CD4-positive, alpha-beta memory T cell (primary cell): ENCODE measurements at regions of chr6 and their contacts with region 1.

Region 1: DNA sequence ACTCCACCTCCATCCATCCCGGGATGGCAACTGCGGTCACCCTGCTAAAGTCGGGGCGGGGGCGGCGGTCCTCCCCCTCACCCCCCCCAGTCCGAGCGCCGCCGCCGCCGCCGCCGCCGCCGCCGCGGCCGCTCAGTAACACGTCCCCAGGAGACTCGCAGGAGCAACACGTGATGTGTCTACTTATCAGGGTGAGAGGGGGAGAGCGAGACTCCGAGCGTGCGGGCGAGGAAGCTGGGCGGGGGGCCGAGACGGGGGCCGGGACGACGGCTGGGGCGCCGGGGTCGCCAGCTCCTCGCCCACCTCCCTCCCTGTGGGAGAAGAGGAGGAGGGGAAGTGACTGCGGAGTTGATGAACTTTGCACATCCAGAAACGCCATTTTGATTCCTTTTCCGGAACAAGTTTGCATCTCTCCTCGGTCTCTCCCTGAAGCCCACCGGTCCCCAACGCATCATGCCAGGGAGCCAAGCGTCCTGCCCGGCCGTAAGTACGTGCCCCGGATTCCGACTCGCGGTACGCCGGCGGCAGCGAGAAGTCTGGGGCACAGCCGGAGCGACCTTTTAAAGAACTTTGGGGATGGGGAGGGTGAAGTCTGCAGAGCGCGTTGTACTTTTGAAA is at the start of gene RREB1:
- DNase-seq: peak; percentile 54 to 77 (median 64)
- H3K4me3 ChIP-seq: peak within 1 kb of the TSS; percentile 82 to 99
- H3K4me3 Mint-ChIP-seq: peak within 1 kb of the TSS; percentile 94 to 97 (median 96)
- H3K27ac ChIP-seq: peak within 1 kb of the TSS; percentile 74
- H3K27ac Mint-ChIP-seq: peak within 1 kb of the TSS; percentile 94 to 96 (median 95)
- H3K4me1 ChIP-seq: peaks cover 36% of the 10 kb centered on the region
- H3K4me1 Mint-ChIP-seq: peaks cover 30 to 44% (median 36%) of the 10 kb centered on the region in 4 donors
- H3K27me3 ChIP-seq: no peaks in the 10 kb centered on the region
- H3K27me3 Mint-ChIP-seq: no peaks in the 10 kb centered on the region
- total RNA-seq, gene RREB1: 43.0 to 43.4 TPM

Region 2: DNA sequence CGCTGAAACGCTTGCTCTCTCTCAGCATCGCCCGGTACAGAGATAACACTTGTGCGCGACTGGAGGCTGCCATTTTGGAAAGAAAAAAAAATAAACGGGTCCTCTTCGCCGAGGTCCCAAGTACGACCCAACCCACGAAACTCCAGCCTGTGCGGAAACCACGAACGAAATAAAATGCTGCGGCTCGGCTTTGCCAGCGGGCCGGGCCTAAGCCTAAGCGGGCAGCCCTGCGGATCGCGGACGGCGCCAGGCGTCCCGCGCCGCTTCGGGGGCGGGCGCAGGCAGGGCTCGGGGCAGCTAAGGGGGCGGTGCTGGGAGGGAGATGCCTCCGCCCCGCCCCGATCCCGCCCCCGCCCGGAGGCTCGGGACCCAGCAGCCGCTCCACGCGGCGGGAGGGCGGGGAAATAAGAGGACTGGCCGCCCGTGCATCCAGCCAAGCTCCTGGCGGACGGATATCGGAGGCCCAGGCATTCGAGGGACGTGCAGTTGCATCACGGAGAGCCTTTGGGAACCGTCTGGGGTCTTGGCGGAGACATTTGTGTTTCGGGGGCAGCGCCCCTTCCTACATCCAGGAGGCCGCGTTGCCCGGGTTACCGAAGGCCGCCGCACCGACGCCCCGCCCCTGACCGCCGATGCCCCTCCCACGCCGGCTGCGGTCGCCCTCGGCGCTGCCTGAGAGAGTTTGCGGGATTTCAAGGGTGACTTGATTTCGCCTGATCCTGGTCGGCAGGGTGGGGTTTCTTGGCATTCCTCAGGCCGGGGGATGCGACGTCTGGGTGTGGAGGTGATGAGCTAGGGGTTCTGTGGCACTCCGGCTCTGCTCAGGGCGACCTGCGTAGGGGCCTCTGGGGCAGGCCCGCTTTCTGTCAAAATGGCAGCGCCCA is 1846.8 kb before region 1 on chr6 and contains the starts of genes FARS2 and LYRM4:
- CTCF ChIA-PET with region 1: no interaction called
- POLR2A ChIA-PET with region 1: no interaction called
- intact Hi-C with region 1: loop called (anchors 5 kb)
- DNase-seq: peak; percentile 90 to 99 (median 96)
- H3K4me3 ChIP-seq: peak within 1 kb of the TSS; percentile 95 to 96
- H3K4me3 Mint-ChIP-seq: peak within 1 kb of the TSS; percentile 96 to 99 (median 99)
- H3K27ac ChIP-seq: peak within 1 kb of the TSS; percentile 95
- H3K27ac Mint-ChIP-seq: peak within 1 kb of the TSS; percentile 99 to 100 (median 100)
- H3K4me1 ChIP-seq: peaks cover 21% of the 10 kb centered on the region
- H3K4me1 Mint-ChIP-seq: peaks cover 18 to 40% (median 27%) of the 10 kb centered on the region in 4 donors
- H3K27me3 ChIP-seq: no peaks in the 10 kb centered on the region
- H3K27me3 Mint-ChIP-seq: no peaks in the 10 kb centered on the region
- total RNA-seq, gene FARS2: 15.6 to 19.2 TPM
- total RNA-seq, gene LYRM4: 10.6 to 14.3 TPM

Region 3: GRCh38 chr6:6366803-6367202 is 740.9 kb before region 1 on chr6:
- CTCF ChIA-PET with region 1: no interaction called
- POLR2A ChIA-PET with region 1: no interaction called
- intact Hi-C with region 1: no loop called
- DNase-seq: no peak
- H3K4me3 ChIP-seq: no peak overlapping the region
- H3K4me3 Mint-ChIP-seq: no peak overlapping the region
- H3K27ac ChIP-seq: no peak overlapping the region
- H3K27ac Mint-ChIP-seq: no peak overlapping the region
- H3K4me1 ChIP-seq: no peaks in the 10 kb centered on the region
- H3K4me1 Mint-ChIP-seq: no peaks in the 10 kb centered on the region
- H3K27me3 ChIP-seq: no peaks in the 10 kb centered on the region
- H3K27me3 Mint-ChIP-seq: peaks cover 2 to 4% of the 10 kb centered on the region in 2 donors

Region 4: DNA sequence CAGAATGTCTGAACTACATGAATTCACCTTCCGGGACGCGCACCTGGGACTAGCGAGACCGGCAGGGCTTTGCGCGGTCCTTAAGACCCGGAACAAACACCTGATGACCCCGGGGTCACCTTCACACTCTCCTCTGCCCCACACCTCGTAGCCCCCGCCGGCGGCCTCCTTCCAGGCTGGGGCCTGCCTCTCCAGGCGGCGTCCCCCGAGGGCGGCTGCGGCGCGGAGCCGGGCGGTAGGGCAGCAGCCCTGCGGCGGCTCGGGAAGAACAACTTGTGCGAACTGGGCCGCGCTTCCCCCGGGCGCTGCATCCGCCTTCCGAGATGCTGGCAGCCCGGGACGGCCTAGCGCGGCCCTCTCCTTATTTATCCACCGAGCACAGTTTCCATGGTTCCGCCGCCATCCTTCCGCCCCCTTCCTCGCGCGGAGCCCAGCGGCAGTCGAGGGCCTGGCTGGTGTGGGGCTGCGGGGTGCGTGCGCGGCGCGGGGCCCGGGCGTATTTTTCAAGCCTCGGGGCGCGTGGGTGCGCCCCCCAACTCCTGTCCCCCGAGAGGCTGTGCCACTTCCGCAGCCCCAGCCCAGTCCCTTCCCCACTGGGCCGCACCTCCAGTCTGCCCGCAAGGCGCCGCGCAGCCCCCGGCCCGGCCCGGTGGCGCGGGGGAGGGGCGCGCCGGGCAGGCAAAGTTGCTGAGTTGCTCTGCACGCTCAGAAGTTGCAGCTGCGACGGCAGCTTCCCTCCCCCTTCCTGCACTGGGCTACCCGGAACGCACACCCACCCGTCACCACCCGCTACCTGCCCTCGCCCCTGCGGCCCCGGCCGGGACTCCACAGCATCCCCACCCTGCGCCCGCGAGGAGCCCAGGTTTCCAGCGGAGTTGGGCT is 56.2 kb before region 1 on chr6:
- CTCF ChIA-PET with region 1: interaction called, 4 read pairs
- POLR2A ChIA-PET with region 1: interaction called, 14 read pairs
- intact Hi-C with region 1: loop called (anchors 2 kb)
- DNase-seq: peak; percentile 57 to 69 (median 60)
- H3K4me3 ChIP-seq: peak overlapping the region; percentile 23 to 59
- H3K4me3 Mint-ChIP-seq: peak overlapping the region; percentile 65 to 85 (median 72)
- H3K27ac ChIP-seq: peak overlapping the region; percentile 25
- H3K27ac Mint-ChIP-seq: peak overlapping the region in 2 of 7 donors; percentile 57 to 60
- H3K4me1 ChIP-seq: peaks cover 8% of the 10 kb centered on the region
- H3K4me1 Mint-ChIP-seq: peaks cover 2 to 13% (median 9%) of the 10 kb centered on the region in 4 donors
- H3K27me3 ChIP-seq: no peaks in the 10 kb centered on the region
- H3K27me3 Mint-ChIP-seq: no peaks in the 10 kb centered on the region

Region 5: DNA sequence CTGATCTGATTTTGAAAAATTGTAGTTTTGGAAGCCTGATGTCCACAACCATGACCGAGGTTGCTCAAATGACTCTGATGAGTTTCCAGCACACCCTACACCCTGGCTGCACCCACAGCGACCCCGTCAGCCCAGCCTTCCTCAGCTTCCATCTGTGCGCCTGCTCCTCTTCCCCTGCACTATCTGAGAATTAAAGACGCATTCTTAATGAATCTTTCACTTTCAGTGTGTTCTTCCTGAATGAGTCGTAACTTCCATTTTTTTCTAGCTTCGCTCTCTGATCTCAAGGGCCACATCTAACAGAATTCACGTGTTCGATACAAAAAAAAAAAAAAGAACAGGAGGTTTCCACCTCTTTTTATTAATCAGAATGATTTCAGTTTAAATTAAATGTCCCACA is 21.2 kb before region 1 on chr6:
- CTCF ChIA-PET with region 1: interaction called, 18 read pairs
- POLR2A ChIA-PET with region 1: interaction called, 58 read pairs
- intact Hi-C with region 1: loop called (anchors 1 kb)
- DNase-seq: peak in 4 of 5 donors; percentile 47 to 56 (median 52)
- H3K4me3 ChIP-seq: peak overlapping the region; percentile 13 to 44
- H3K4me3 Mint-ChIP-seq: peak overlapping the region; percentile 72 to 97 (median 86)
- H3K27ac ChIP-seq: peak overlapping the region; percentile 17
- H3K27ac Mint-ChIP-seq: peak overlapping the region; percentile 76 to 96 (median 88)
- H3K4me1 ChIP-seq: peaks cover 25% of the 10 kb centered on the region
- H3K4me1 Mint-ChIP-seq: peaks cover 17 to 39% (median 24%) of the 10 kb centered on the region in 4 donors
- H3K27me3 ChIP-seq: no peaks in the 10 kb centered on the region
- H3K27me3 Mint-ChIP-seq: no peaks in the 10 kb centered on the region

Region 6: GRCh38 chr6:7135755-7136154 is 28.1 kb after region 1 on chr6:
- CTCF ChIA-PET with region 1: interaction called, 6 read pairs
- POLR2A ChIA-PET with region 1: interaction called, 34 read pairs
- intact Hi-C with region 1: loop called (anchors 1 kb)
- DNase-seq: no peak
- H3K4me3 ChIP-seq: no peak overlapping the region
- H3K4me3 Mint-ChIP-seq: peak overlapping the region in 1 of 8 donors; percentile 0
- H3K27ac ChIP-seq: no peak overlapping the region
- H3K27ac Mint-ChIP-seq: peak overlapping the region; percentile 48 to 99 (median 64)
- H3K4me1 ChIP-seq: peaks cover 53% of the 10 kb centered on the region
- H3K4me1 Mint-ChIP-seq: peaks cover 49 to 85% (median 63%) of the 10 kb centered on the region in 4 donors
- H3K27me3 ChIP-seq: no peaks in the 10 kb centered on the region
- H3K27me3 Mint-ChIP-seq: no peaks in the 10 kb centered on the region